Endothelial cell of umbilical vein (primary cell): ENCODE measurements at regions of chr19 and their contacts with region 1.

Region 1: GRCh38 chr19:7799640-7800355 is 30.2 kb upstream of the EVI5L start:
- DNase-seq: peak; percentile 83
- H3K4me3 ChIP-seq: peak overlapping the region in 2 of 3 experiments; percentile 2 to 12
- H3K27ac ChIP-seq: no peak overlapping the region
- H3K4me1 ChIP-seq: peaks cover 22% of the 10 kb centered on the region
- H3K27me3 ChIP-seq: no peaks in the 10 kb centered on the region
- CTCF ChIP-seq: peak; percentile 43 to 47
- POLR2A ChIP-seq: no peak

Region 2: GRCh38 chr19:7355151-7355820 is 444.5 kb before region 1 on chr19:
- CTCF ChIA-PET with region 1: interaction called, 25 read pairs
- POLR2A ChIA-PET with region 1: interaction called, 3 read pairs
- dilution Hi-C with region 1: no loop called
- intact Hi-C with region 1: loop called (anchors 1 kb)
- DNase-seq: no peak
- H3K4me3 ChIP-seq: no peak overlapping the region
- H3K27ac ChIP-seq: no peak overlapping the region
- H3K4me1 ChIP-seq: no peaks in the 10 kb centered on the region
- H3K27me3 ChIP-seq: peaks cover 0 to 5% of the 10 kb centered on the region in 2 experiments
- CTCF ChIP-seq: no peak
- POLR2A ChIP-seq: no peak

Region 3: DNA sequence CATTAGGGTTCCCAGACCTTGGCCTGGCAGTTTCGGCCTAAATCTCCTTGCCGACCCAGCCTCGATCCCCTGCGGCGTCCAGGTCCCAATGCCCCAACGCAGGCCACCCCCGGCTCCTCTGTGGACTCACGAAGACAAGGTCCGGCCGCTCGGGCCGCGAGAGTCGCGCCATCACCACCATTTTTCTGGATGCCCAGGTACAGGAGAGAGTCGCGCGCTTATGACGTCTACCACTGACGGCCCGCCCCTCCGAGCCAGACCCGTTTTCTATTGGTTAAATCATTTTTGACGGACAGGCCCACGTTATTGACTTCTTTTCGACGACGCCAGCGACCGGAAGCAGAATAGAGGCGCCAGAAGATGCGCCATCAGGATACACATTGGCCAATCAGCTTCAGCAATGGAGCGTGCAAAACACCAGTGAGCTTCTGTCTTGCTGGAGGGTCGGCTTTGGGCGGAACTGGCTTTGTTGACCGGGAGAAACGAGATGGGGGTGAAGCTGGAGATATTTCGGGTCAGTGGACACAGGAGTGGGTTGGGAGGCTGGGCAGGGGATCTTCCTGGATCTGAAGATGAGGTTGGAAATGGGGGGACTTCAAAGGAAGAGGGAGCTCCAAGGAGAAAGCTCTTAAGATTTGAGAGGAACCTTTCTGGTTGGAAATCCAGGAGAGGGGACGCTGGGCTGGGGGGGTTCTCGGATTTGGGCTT is 170.3 kb before region 1 on chr19 and contains the starts of genes PET100 and XAB2:
- CTCF ChIA-PET with region 1: interaction called, 3 read pairs
- POLR2A ChIA-PET with region 1: interaction called, 3 read pairs
- dilution Hi-C with region 1: no loop called
- intact Hi-C with region 1: loop called (anchors 1 kb)
- DNase-seq: peak; percentile 99
- H3K4me3 ChIP-seq: peak within 1 kb of the TSS; percentile 91 to 96 (median 92)
- H3K27ac ChIP-seq: peak within 1 kb of the TSS; percentile 94
- H3K4me1 ChIP-seq: peaks cover 16% of the 10 kb centered on the region
- H3K27me3 ChIP-seq: no peaks in the 10 kb centered on the region
- CTCF ChIP-seq: no peak
- POLR2A ChIP-seq: no peak
- total RNA-seq, gene PET100: 162 and 172 TPM in 2 replicates
- total RNA-seq, gene XAB2: 37.0 and 37.3 TPM in 2 replicates

Region 4: GRCh38 chr19:7652061-7652641 is 147.6 kb before region 1 on chr19:
- CTCF ChIA-PET with region 1: interaction called, 49 read pairs
- POLR2A ChIA-PET with region 1: no interaction called
- dilution Hi-C with region 1: no loop called
- intact Hi-C with region 1: loop called (anchors 1 kb)
- DNase-seq: peak; percentile 79
- H3K4me3 ChIP-seq: peak overlapping the region in 1 of 3 experiments; percentile 62
- H3K27ac ChIP-seq: no peak overlapping the region
- H3K4me1 ChIP-seq: peaks cover 14% of the 10 kb centered on the region
- H3K27me3 ChIP-seq: peaks cover 0 to 2% of the 10 kb centered on the region in 2 experiments
- CTCF ChIP-seq: peak; percentile 90 to 99
- POLR2A ChIP-seq: no peak

Region 5: GRCh38 chr19:7748770-7749209 is 51.0 kb before region 1 on chr19:
- CTCF ChIA-PET with region 1: interaction called, 35 read pairs
- POLR2A ChIA-PET with region 1: interaction called, 3 read pairs
- dilution Hi-C with region 1: no loop called
- intact Hi-C with region 1: loop called (anchors 1 kb)
- DNase-seq: peak; percentile 58
- H3K4me3 ChIP-seq: no peak overlapping the region
- H3K27ac ChIP-seq: no peak overlapping the region
- H3K4me1 ChIP-seq: no peaks in the 10 kb centered on the region
- H3K27me3 ChIP-seq: peaks cover 0 to 2% of the 10 kb centered on the region in 2 experiments
- CTCF ChIP-seq: peak in 1 of 2 donors; percentile 43
- POLR2A ChIP-seq: no peak

Region 6: DNA sequence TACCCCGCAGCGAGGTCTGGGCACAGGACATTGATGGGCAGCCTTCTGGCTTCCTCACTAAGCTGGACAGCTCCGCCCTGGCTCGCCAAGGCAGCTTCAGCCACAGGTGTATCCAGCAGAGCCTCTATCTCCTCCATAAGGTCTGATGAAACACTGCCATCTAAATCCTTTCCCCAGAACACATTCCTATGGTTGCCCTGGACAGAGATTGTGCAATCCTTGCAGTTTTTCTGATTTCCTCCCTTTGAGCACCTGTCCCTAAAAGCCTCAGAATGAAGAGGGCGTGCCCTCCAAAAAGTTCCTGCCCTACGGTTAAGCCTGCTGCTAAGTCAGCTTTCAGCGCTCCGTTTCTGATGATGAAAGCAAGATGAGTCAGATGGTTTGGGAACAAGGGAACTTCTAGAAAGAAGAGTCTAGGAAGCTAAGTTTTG is 15.8 kb before region 1 on chr19:
- CTCF ChIA-PET with region 1: interaction called, 35 read pairs
- POLR2A ChIA-PET with region 1: no interaction called
- dilution Hi-C with region 1: no loop called
- intact Hi-C with region 1: no loop called
- DNase-seq: no peak
- H3K4me3 ChIP-seq: no peak overlapping the region
- H3K27ac ChIP-seq: no peak overlapping the region
- H3K4me1 ChIP-seq: peaks cover 6% of the 10 kb centered on the region
- H3K27me3 ChIP-seq: no peaks in the 10 kb centered on the region
- CTCF ChIP-seq: no peak
- POLR2A ChIP-seq: no peak

Region 7: GRCh38 chr19:7829561-7830271 is 29.9 kb after region 1 on chr19 and contains the start of gene EVI5L:
- CTCF ChIA-PET with region 1: interaction called, 13 read pairs
- POLR2A ChIA-PET with region 1: no interaction called
- dilution Hi-C with region 1: no loop called
- intact Hi-C with region 1: loop called (anchors 2 kb)
- DNase-seq: peak; percentile 100
- H3K4me3 ChIP-seq: peak within 1 kb of the TSS; percentile 35 to 89 (median 55)
- H3K27ac ChIP-seq: peak within 1 kb of the TSS; percentile 13
- H3K4me1 ChIP-seq: peaks cover 11% of the 10 kb centered on the region
- H3K27me3 ChIP-seq: peaks cover 0 to 3% of the 10 kb centered on the region in 2 experiments
- CTCF ChIP-seq: no peak
- POLR2A ChIP-seq: no peak
- total RNA-seq, gene EVI5L: 13.5 and 18.3 TPM in 2 replicates